ENCODE measurements at regions of chr11 and their contacts with region 1.

Region 1: GRCh38 chr11:12008790-12009616 is 577 bp upstream of the DKK3 start:
- DNase-seq: peak; percentile 36
- H3K4me3 ChIP-seq: peak overlapping the region; percentile 59 to 85 (median 77)
- H3K27ac ChIP-seq: peak overlapping the region; percentile 36
- H3K4me1 ChIP-seq: peaks cover 41% of the 10 kb centered on the region
- H3K27me3 ChIP-seq: no peaks in the 10 kb centered on the region
- CTCF ChIP-seq: no peak

Region 2: DNA sequence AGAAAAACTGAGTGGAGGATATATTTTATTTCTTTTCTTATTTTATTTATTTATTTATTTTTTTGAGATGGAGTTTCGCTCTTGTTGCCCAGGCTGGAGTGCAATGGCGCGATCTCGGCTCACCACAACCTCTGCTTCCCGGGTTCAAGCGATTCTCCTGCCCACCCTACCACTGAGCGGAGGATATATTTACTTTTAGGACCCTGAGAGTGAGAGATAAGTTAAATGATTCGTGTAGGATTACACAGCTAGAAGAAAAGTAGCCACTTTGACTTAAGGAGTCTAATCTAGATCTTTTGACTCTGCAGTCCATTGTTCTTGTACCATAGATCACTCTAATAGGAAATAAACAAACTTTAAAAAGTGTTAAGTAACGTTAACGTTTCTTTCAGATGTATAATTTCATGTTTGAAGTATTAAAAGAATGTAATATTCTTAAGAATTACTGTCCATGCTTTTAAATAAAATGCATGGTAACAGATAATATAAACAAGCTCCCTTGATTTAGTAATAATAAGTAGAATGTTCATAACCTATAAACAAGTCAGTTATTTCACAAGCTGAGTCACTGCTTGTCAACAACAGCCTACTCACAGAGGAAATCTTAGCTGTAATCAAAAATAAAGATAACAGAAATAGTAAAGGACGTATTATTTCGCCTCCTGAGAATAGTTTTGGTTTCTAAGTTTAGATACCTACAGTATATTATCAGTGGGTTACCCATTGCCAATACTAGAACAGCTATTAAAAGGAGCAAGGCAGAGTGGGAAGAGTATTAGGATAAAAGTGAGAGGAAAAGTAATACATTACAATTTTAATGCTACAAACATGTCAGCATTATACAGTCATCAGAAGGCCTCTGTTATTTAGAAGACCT is 148.7 kb before region 1 on chr11:
- CTCF ChIA-PET with region 1: no interaction called
- dilution Hi-C with region 1: no loop called
- in situ Hi-C with region 1: no loop called
- intact Hi-C with region 1: no loop called
- DNase-seq: no peak
- H3K4me3 ChIP-seq: no peak overlapping the region
- H3K27ac ChIP-seq: no peak overlapping the region
- H3K4me1 ChIP-seq: peaks cover 6% of the 10 kb centered on the region
- H3K27me3 ChIP-seq: no peaks in the 10 kb centered on the region
- CTCF ChIP-seq: no peak

Region 3: DNA sequence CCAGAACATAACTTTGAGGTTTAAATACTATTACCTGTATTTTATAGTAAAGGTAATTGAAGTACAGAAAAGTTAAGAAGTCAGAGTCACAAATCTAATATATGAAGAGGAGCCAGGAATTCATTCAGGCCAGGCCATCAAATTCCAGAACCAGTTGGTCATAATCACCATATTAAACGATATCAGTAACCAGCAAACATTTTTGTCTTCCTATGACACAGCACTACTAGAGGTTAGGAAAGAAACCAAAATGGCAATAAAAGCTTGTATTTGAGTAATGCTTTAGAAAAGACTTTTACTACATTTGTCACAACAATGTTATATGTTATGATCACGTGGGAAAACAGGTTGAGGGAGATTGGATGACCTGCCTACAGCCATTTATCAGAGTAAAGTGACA is 62.8 kb before region 1 on chr11:
- CTCF ChIA-PET with region 1: no interaction called
- dilution Hi-C with region 1: loop called (anchors 5 kb)
- in situ Hi-C with region 1: no loop called
- intact Hi-C with region 1: no loop called
- DNase-seq: no peak
- H3K4me3 ChIP-seq: no peak overlapping the region
- H3K27ac ChIP-seq: no peak overlapping the region
- H3K4me1 ChIP-seq: no peaks in the 10 kb centered on the region
- H3K27me3 ChIP-seq: no peaks in the 10 kb centered on the region
- CTCF ChIP-seq: no peak

Region 4: GRCh38 chr11:11985016-11985715 is 23.8 kb before region 1 on chr11:
- CTCF ChIA-PET with region 1: no interaction called
- dilution Hi-C with region 1: no loop called
- in situ Hi-C with region 1: no loop called
- intact Hi-C with region 1: loop called (anchors 2 kb)
- DNase-seq: no peak
- H3K4me3 ChIP-seq: no peak overlapping the region
- H3K27ac ChIP-seq: no peak overlapping the region
- H3K4me1 ChIP-seq: peaks cover 48% of the 10 kb centered on the region
- H3K27me3 ChIP-seq: no peaks in the 10 kb centered on the region
- CTCF ChIP-seq: no peak

Measured in mammary epithelial cell (primary cell).